ENCODE measurements at regions of chr11 and their contacts with region 1.

Region 1: GRCh38 chr11:114262681-114263512 is 33.3 kb upstream of the NNMT start:
- DNase-seq: no peak
- H3K4me3 ChIP-seq: no peak overlapping the region
- H3K27ac ChIP-seq: no peak overlapping the region
- H3K4me1 ChIP-seq: no peaks in the 10 kb centered on the region
- H3K27me3 ChIP-seq: no peaks in the 10 kb centered on the region
- CTCF ChIP-seq: peak; percentile 55 to 81 (median 76)
- POLR2A ChIP-seq: no peak

Region 2: GRCh38 chr11:113167595-113167994 is 1095.3 kb before region 1 on chr11:
- intact Hi-C with region 1: no loop called
- DNase-seq: no peak
- H3K4me3 ChIP-seq: no peak overlapping the region
- H3K27ac ChIP-seq: no peak overlapping the region
- H3K4me1 ChIP-seq: no peaks in the 10 kb centered on the region
- H3K27me3 ChIP-seq: no peaks in the 10 kb centered on the region
- CTCF ChIP-seq: no peak
- POLR2A ChIP-seq: no peak

Region 3: GRCh38 chr11:113896156-113896879 is 366.6 kb before region 1 on chr11:
- intact Hi-C with region 1: loop called (anchors 2 kb)
- DNase-seq: peak; percentile 28 to 30
- H3K4me3 ChIP-seq: no peak overlapping the region
- H3K27ac ChIP-seq: no peak overlapping the region
- H3K4me1 ChIP-seq: no peaks in the 10 kb centered on the region
- H3K27me3 ChIP-seq: no peaks in the 10 kb centered on the region
- CTCF ChIP-seq: peak; percentile 60 to 71 (median 66)
- POLR2A ChIP-seq: no peak

Region 4: DNA sequence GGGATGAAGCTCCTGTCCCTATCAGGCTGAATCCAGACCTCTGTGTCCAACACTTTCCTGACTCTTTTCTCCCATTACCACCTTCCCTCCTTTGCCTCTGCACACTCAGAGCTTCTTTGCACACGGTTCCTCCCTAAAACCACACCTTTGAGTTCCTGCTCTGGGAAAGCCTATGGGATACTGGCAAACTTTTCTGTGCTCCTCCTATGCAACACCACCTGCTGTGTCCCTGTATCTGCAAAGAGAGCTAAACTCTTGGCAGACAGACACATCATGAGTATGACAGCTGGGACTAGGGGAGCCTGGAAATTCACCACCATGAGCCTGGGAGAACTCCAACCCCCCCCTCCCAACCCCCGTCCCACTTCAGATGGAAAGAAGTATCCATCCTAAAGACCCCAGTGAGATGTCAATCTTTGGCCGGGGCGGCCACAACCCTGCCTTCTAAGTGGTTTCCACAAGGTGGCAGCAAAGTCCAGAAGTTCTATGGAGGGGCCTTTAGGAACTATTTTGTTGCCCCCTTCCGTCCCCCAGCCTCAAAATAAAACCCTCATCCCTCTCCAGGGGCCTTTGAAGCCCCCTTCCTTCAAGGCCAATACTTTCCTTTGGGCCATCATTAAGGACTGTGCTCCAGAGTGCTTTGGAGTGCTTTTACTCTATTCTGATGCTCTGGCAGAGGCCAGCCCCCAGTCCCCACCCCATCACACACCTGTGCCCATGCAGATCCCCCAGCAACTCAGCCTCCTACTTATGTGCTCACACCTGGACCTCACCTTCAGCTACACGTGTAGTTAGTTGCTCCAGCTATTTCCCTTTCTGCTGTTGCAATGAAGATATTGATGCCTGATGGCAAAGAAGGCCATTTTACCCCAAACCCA is 268.6 kb before region 1 on chr11:
- intact Hi-C with region 1: loop called (anchors 10 kb)
- DNase-seq: peak in 1 of 2 donors; percentile 27
- H3K4me3 ChIP-seq: no peak overlapping the region
- H3K27ac ChIP-seq: no peak overlapping the region
- H3K4me1 ChIP-seq: no peaks in the 10 kb centered on the region
- H3K27me3 ChIP-seq: no peaks in the 10 kb centered on the region
- CTCF ChIP-seq: peak; percentile 64 to 71 (median 66)
- POLR2A ChIP-seq: no peak

Region 5: DNA sequence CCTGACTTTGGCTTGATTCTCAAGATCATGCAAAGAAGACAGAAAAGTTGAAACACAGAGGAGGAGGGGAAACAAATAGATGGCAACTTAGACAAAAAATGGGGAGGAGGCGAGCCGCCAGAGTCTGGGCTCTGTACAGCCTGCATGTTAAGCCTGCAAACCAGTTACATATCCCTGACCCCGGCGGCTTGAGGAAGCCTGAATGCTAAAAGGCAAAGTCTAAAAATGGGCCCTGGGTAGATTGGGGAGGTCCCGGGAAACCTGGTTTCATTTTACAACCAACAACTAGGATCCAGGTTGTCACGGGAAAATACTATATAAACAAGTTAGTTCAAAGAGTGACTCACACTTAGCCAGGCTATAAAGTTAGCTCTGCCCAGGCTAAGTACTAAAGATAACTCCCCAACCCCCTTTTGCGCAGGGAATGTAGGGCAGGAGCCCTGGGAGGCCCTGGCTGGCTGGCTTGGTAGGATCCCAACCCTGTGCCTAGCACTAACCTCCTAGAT is 222.1 kb before region 1 on chr11:
- intact Hi-C with region 1: loop called (anchors 5 kb)
- DNase-seq: peak; percentile 54 to 78
- H3K4me3 ChIP-seq: no peak overlapping the region
- H3K27ac ChIP-seq: peak overlapping the region; percentile 85 to 88
- H3K4me1 ChIP-seq: no peaks in the 10 kb centered on the region
- H3K27me3 ChIP-seq: no peaks in the 10 kb centered on the region
- CTCF ChIP-seq: no peak
- POLR2A ChIP-seq: no peak

Region 6: GRCh38 chr11:114059278-114059983 is 203.5 kb before region 1 on chr11 and contains the start of gene ZBTB16:
- intact Hi-C with region 1: loop called (anchors 5 kb)
- DNase-seq: peak; percentile 87 to 91
- H3K4me3 ChIP-seq: peak within 1 kb of the TSS; percentile 98
- H3K27ac ChIP-seq: peak within 1 kb of the TSS; percentile 99 to 100
- H3K4me1 ChIP-seq: peaks cover 2 to 11% of the 10 kb centered on the region in 2 donors
- H3K27me3 ChIP-seq: no peaks in the 10 kb centered on the region
- CTCF ChIP-seq: peak; percentile 54 to 78 (median 66)
- POLR2A ChIP-seq: peak; percentile 92 to 95
- total RNA-seq, gene ZBTB16: 25.5 to 302 (median 151) TPM

Region 7: DNA sequence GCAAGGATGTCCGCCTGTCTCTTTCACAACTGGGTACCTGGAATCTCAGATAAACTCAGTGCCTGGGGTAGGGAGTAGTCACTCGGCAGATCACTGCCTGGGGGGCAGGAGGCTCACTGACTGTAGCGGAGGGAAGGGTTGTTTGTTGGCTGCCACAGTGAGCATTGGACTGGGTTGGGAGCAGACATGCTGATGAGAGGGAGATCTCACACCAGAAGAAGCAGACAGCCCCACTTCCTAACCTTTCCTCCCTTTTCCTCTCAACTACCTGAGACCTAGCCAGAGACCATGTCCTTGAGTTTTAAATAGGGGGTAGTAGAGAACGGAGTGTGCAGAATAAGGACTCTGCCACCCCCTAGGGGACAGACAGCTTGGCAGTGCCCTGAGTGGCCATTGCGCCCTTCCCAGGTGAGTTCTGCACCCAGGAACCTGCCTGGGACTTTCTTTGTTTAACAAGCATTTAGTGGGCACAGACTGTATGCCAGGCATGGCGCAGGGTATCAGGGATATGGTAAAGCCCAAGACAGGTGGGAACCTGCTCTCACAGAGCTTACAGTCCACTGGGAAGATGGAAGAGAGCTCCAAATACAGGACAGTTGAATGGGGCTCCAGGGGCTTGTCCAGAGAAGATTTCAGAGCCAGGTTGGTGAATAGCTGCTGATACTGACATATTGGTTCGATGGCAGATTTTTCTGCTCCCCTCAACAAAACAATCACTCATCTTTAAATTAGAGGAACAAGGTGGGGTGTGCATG is 82.4 kb before region 1 on chr11:
- intact Hi-C with region 1: no loop called
- DNase-seq: peak in 1 of 2 donors; percentile 62
- H3K4me3 ChIP-seq: peak overlapping the region; percentile 41 to 47
- H3K27ac ChIP-seq: peak overlapping the region; percentile 97 to 100
- H3K4me1 ChIP-seq: peaks cover 33 to 34% of the 10 kb centered on the region in 2 donors
- H3K27me3 ChIP-seq: no peaks in the 10 kb centered on the region
- CTCF ChIP-seq: peak; percentile 33 to 63 (median 48)
- POLR2A ChIP-seq: no peak

Region 8: GRCh38 chr11:114358716-114359115 is 95.8 kb after region 1 on chr11:
- intact Hi-C with region 1: no loop called
- DNase-seq: no peak
- H3K4me3 ChIP-seq: no peak overlapping the region
- H3K27ac ChIP-seq: no peak overlapping the region
- H3K4me1 ChIP-seq: no peaks in the 10 kb centered on the region
- H3K27me3 ChIP-seq: no peaks in the 10 kb centered on the region
- CTCF ChIP-seq: no peak
- POLR2A ChIP-seq: no peak

Region 9: DNA sequence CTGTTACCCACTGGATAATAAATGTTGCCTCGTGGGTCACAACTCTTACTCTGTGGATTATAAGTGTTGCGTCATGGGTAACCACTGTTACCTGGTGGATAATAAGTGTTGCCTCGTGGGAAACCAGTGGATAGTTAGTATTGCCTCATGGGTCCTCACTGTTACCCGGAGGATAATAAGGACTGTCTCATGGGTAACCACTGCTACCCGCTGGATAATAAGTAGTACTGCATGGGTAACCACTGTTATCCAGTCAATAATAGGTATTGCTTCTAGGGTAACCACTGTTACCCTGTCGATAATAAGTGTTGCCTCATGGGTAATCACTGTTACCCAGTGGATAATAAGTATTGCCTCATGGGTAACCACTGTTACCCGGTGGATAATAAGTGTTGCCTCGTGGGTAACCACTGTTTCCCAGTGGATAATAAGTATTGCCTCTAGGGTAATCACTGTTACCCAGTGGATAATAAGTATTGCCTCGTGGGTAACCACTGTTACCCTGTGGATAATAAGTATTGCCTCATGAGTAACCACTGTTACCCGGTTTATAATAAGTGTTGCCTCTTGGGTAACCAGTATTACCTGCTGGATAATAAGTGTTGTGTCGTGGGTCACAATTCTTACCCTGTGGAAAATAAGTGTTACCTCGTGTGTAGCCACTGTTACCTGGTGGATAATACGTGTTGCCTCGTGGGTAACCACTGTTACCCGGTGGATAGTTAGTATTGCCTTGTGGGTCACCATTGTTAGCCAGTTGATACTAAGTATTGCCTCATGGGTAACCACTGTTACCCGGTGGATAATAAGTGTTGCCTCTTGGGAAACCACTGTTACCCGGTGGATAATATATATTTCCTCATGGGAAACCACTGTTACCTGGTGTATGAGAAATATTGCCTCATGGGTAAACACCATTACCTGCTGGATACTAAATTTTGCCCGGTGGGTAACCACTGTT is 348.4 kb after region 1 on chr11:
- intact Hi-C with region 1: no loop called
- DNase-seq: no peak
- H3K4me3 ChIP-seq: no peak overlapping the region
- H3K27ac ChIP-seq: no peak overlapping the region
- H3K4me1 ChIP-seq: no peaks in the 10 kb centered on the region
- H3K27me3 ChIP-seq: no peaks in the 10 kb centered on the region
- CTCF ChIP-seq: peak in 1 of 4 experiments; percentile 26
- POLR2A ChIP-seq: no peak

Measured in uterus (tissue), 4 donors.